MCF 10A (cell line): ENCODE measurements at regions of chr2 and their contacts with region 1.

Region 1: DNA sequence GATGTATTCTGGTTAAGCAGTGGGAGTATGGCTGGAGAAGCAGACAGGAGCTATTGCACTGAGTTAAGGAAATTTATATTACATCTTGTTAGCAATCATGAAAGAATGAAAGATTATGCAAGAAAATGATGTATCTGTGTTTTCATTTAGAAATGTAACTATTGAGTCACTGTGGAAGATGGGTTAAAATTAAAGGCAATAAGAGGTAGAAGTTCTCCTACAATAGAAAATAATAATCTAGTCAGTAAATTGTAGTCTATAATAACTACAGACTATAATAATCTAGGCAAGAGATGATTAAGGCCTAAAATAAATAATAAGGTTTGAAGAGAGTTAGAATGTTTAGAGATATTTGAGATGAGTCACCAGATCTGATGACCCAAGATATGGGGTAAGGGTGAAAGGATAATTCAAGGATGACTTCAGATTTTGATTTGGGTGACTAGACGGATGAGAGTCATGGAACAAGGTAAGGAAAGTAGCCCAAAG is 371.9 kb upstream of the KCNH7 start:
- DNase-seq: peak; percentile 62
- H3K4me3 Mint-ChIP-seq: no peak overlapping the region
- H3K27ac Mint-ChIP-seq: peak overlapping the region; percentile 92
- H3K4me1 Mint-ChIP-seq: peaks cover 25% of the 10 kb centered on the region
- H3K27me3 Mint-ChIP-seq: no peaks in the 10 kb centered on the region
- CTCF ChIP-seq: no peak

Region 2: GRCh38 chr2:162795312-162795711 is 415.2 kb before region 1 on chr2:
- CTCF ChIA-PET with region 1: no interaction called
- POLR2A ChIA-PET with region 1: no interaction called
- intact Hi-C with region 1: no loop called
- DNase-seq: peak; percentile 6
- H3K4me3 Mint-ChIP-seq: no peak overlapping the region
- H3K27ac Mint-ChIP-seq: no peak overlapping the region
- H3K4me1 Mint-ChIP-seq: no peaks in the 10 kb centered on the region
- H3K27me3 Mint-ChIP-seq: peaks cover 18% of the 10 kb centered on the region
- CTCF ChIP-seq: no peak

Region 3: DNA sequence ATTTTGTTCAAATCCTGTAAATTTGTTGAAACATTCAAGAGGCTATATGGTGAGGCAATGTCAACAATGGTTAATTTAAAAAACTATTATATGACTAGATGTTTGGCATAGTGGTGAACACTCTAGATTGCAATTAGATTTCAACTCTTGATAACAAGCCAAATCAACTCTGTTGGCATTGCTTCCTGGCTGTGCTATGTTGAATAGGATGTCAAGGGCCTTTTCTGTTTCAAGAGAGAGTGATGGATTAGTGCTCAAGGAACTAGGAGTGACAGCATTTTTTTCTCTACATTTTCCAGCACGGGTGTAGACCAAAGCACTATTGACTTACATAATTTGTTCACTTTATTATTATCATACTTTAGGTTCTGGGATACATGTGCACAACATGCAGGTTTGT is 199.5 kb before region 1 on chr2:
- CTCF ChIA-PET with region 1: no interaction called
- POLR2A ChIA-PET with region 1: no interaction called
- intact Hi-C with region 1: no loop called
- DNase-seq: no peak
- H3K4me3 Mint-ChIP-seq: no peak overlapping the region
- H3K27ac Mint-ChIP-seq: no peak overlapping the region
- H3K4me1 Mint-ChIP-seq: no peaks in the 10 kb centered on the region
- H3K27me3 Mint-ChIP-seq: peaks cover 27% of the 10 kb centered on the region
- CTCF ChIP-seq: no peak

Region 4: DNA sequence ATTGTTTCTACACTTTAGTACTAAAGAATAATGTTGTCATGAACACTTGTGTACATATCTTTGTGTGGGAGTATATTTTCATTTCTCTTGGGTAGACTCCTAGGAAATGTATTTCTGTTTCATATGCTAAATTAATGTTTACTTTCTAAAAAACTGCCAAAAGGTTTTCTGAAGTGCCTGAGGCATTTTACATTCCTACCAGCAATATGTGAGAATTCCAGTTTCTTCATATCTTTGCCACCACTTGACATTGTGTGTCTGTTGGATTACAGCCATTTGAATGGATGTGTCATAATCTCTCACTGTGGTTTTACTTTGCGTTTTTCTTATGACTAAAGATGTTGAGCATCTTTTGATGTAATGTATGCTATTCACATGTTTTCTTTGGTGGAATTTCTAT is 56.3 kb after region 1 on chr2:
- CTCF ChIA-PET with region 1: no interaction called
- POLR2A ChIA-PET with region 1: no interaction called
- intact Hi-C with region 1: loop called (anchors 1 kb)
- DNase-seq: peak; percentile 97
- H3K4me3 Mint-ChIP-seq: no peak overlapping the region
- H3K27ac Mint-ChIP-seq: no peak overlapping the region
- H3K4me1 Mint-ChIP-seq: peaks cover 13% of the 10 kb centered on the region
- H3K27me3 Mint-ChIP-seq: no peaks in the 10 kb centered on the region
- CTCF ChIP-seq: no peak